ENCODE measurements at regions of chr5 and their contacts with region 1.

Region 1: DNA sequence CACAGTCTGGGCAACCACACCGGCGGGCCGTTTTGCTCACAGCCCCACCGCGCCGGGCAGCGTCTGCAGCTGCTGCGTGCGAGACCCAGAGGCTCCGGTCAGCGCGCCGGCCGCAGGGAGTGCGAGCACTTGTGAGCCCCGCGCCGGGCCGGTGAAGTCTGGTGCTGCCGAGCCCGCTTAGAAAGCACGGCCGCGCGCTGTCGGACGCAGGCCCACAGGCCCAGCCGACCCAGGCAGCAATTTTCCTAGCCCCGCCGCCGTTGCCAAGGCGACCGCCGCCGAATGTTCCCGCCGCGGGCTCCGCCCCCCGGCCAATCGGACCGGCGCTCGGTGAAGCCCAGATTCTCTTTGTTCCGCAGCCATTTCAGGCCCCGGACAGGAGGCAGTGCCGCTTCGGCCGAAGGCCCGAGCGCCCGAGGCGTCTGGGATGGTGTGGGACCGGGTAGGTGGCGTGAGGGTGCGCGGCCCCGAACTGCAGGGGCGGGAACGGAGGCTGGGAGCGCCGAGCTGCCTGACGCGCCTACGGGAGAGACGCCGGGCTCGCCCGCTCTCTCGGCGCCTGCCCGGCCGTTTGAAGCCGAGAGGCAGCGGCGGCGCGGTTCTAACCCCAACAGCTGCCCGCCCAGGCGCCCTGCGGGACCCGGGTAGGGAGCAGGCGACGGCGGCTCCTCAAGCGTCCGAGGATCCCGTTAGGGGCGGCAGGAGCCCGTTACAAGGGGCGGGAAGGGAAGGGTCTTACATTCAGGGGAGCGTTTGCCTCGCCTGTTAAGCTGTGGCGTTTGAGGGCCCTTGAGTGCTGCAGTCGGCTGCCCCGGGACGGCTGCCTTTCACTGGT is at the start of gene TNPO1:
- DNase-seq: peak; percentile 94
- H3K4me3 Mint-ChIP-seq: peak within 1 kb of the TSS; percentile 97
- H3K27ac Mint-ChIP-seq: peak within 1 kb of the TSS; percentile 90
- H3K4me1 Mint-ChIP-seq: peaks cover 15% of the 10 kb centered on the region
- H3K27me3 Mint-ChIP-seq: no peaks in the 10 kb centered on the region
- CTCF ChIP-seq: no peak
- total RNA-seq, gene TNPO1: 147 and 167 TPM in 2 replicates

Region 2: DNA sequence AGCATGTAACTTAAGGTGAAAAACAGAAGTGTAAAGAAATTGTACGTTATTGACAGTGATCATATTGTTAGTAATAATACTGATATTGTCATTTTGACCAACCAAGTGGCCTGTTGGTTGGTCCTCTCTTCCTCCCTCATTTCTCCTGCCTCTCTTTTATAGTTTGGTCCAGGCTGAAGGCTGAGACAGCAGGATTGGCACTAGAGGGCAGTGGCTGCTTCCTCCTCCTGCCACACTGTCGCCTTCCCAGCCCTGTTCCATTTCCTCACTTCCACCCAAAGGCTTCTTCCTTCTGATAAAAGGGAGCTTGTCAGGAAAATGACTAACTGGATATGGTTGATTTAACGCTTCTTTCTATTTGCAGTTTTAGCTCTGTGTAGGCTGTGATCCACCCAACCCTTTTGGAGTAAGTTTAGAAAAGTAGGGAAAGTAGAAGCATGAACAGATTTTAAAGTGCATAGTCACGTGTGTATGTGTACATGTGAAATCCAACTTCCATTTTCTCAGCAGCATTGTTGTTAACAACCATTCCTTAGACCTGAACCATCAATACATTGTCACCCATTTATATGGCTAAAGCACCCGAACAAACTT is 460.7 kb before region 1 on chr5:
- CTCF ChIA-PET with region 1: interaction called, 8 read pairs
- POLR2A ChIA-PET with region 1: interaction called, 14 read pairs
- intact Hi-C with region 1: no loop called
- DNase-seq: peak; percentile 61
- H3K4me3 Mint-ChIP-seq: no peak overlapping the region
- H3K27ac Mint-ChIP-seq: no peak overlapping the region
- H3K4me1 Mint-ChIP-seq: peaks cover 13% of the 10 kb centered on the region
- H3K27me3 Mint-ChIP-seq: no peaks in the 10 kb centered on the region
- CTCF ChIP-seq: peak; percentile 35

Region 3: DNA sequence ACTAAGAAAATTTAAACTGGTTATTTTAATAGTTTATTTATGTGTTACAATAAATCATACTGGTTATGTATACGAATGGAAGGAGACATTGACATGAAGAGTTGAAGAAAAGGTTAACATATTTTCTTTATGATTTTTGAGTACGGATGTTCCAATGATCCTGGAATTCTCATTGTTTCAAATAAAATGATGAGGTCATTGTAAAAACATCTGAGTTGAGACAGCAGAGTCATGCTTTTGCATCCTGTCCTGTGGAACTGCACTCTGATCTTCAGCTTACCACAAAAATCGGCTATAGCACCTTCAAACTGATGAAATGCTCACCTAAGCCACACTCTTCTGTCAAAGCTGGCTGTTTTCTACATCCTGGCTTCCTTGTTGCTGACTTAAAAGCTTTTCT is 428.5 kb before region 1 on chr5:
- CTCF ChIA-PET with region 1: interaction called, 3 read pairs
- POLR2A ChIA-PET with region 1: interaction called, 10 read pairs
- intact Hi-C with region 1: no loop called
- DNase-seq: peak; percentile 71
- H3K4me3 Mint-ChIP-seq: peak overlapping the region; percentile 20
- H3K27ac Mint-ChIP-seq: peak overlapping the region; percentile 91
- H3K4me1 Mint-ChIP-seq: peaks cover 65% of the 10 kb centered on the region
- H3K27me3 Mint-ChIP-seq: no peaks in the 10 kb centered on the region
- CTCF ChIP-seq: no peak

Region 4: GRCh38 chr5:72523960-72524582 is 292.5 kb before region 1 on chr5:
- CTCF ChIA-PET with region 1: interaction called, 31 read pairs
- POLR2A ChIA-PET with region 1: interaction called, 37 read pairs
- intact Hi-C with region 1: loop called (anchors 2 kb)
- DNase-seq: peak; percentile 78
- H3K4me3 Mint-ChIP-seq: no peak overlapping the region
- H3K27ac Mint-ChIP-seq: no peak overlapping the region
- H3K4me1 Mint-ChIP-seq: peaks cover 12% of the 10 kb centered on the region
- H3K27me3 Mint-ChIP-seq: no peaks in the 10 kb centered on the region
- CTCF ChIP-seq: peak; percentile 67

Region 5: DNA sequence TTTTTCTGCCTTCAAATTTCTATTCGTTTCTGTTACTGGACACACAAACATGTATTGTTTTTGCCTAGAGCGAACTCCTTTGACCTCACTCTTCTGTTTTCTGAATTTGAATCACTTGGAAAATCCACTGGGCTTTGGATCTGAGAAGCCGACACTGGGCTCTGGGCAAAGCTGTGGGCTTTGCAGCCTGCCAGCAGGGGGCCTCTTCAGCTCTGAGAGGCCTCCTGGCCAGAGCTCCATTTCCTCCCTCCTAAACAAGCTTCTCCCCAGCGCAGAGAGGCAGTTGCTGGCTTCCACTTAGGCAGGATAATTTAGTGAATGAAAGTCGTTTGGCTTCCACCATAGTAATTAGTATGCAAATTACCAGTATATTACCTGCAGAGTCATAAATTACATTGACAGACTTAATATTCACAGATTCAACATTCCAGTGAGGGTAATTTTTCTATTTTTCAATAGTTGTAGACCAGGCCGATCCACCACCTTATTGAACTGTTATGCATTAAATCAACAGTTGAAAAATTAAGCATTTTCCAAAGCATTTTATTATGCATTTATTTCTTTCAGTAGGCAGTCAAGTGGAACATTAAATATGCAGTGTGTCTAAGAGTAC is 205.3 kb before region 1 on chr5:
- CTCF ChIA-PET with region 1: interaction called, 59 read pairs
- POLR2A ChIA-PET with region 1: interaction called, 42 read pairs
- intact Hi-C with region 1: loop called (anchors 1 kb)
- DNase-seq: peak; percentile 78
- H3K4me3 Mint-ChIP-seq: no peak overlapping the region
- H3K27ac Mint-ChIP-seq: no peak overlapping the region
- H3K4me1 Mint-ChIP-seq: peaks cover 3% of the 10 kb centered on the region
- H3K27me3 Mint-ChIP-seq: no peaks in the 10 kb centered on the region
- CTCF ChIP-seq: peak; percentile 86

Region 6: DNA sequence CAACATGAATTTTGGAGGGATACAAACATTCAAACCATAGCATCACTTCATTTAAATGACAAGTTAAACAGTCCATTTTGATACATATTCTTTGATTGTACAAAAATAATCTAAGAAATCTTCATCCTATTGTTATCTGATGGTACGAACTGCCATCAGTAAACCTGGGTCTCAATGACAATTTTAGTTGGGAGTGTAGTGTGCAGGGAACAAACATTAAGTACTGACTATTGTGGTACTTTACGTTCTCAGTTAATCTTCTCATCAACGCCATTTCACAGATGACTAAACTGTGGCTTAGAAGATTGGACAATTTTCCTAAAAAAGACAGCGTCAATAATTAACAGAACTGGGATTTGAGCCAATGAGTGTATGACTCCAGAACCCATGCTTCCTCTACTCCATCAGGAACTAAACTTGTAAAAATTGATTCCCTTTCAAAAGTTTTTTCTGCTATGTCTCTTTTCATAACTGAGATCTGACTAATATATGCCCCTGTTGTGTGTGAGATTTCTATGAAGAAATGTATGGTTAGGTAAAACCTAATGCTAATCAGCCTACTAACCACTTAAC is 21.1 kb after region 1 on chr5:
- CTCF ChIA-PET with region 1: interaction called, 15 read pairs
- POLR2A ChIA-PET with region 1: interaction called, 34 read pairs
- intact Hi-C with region 1: no loop called
- DNase-seq: no peak
- H3K4me3 Mint-ChIP-seq: no peak overlapping the region
- H3K27ac Mint-ChIP-seq: no peak overlapping the region
- H3K4me1 Mint-ChIP-seq: peaks cover 43% of the 10 kb centered on the region
- H3K27me3 Mint-ChIP-seq: no peaks in the 10 kb centered on the region
- CTCF ChIP-seq: no peak